Calu3 (cell line): ENCODE measurements at regions of chrX and their contacts with region 1.

Region 1: DNA sequence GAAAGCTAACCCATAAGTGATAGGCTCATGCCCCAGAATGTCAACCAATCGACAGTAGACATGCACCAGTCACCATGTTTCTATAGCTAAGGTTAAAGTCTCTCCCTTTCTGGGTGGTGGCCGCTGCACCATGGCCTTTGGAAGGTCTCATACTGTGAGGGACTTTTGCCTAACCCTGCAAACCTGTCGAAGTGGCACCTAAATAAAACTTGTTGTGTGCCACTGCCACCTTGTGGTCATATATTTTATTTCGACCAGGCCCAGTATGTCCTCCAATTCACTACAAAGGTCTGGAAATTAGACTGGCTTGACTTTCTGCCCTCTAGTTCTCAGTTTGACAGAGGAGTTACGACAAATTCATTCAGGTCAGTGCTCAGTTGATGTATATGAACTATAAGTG is 163.1 kb downstream of the SMARCA1 start:
- DNase-seq: peak; percentile 56
- H3K4me3 Mint-ChIP-seq: no peak overlapping the region
- H3K27ac Mint-ChIP-seq: no peak overlapping the region
- H3K4me1 Mint-ChIP-seq: no peaks in the 10 kb centered on the region
- H3K27me3 Mint-ChIP-seq: no peaks in the 10 kb centered on the region
- CTCF ChIP-seq: peak; percentile 34

Region 2: DNA sequence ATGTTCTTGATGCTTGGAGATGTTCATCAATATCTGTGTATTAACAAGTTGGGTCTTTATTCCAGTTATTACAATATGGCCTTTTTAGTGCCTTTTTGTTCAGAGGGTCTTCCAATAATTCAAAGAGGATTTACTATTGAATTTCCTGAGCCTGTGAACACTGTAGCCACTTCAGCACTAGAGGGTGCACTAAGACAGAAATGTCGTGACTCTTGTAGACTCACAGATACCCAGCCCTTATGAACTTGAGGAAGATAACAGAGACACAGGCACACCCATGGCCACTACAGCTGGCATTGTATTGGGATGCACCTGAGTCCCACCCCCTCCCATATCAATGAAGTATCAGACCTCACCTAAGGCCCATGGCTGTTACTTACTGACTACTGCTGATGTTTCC is 1253.5 kb before region 1 on chrX:
- CTCF ChIA-PET with region 1: no interaction called
- intact Hi-C with region 1: loop called (anchors 5 kb)
- DNase-seq: no peak
- H3K4me3 Mint-ChIP-seq: no peak overlapping the region
- H3K27ac Mint-ChIP-seq: no peak overlapping the region
- H3K4me1 Mint-ChIP-seq: no peaks in the 10 kb centered on the region
- H3K27me3 Mint-ChIP-seq: no peaks in the 10 kb centered on the region
- CTCF ChIP-seq: no peak

Region 3: GRCh38 chrX:128816919-128817318 is 543.3 kb before region 1 on chrX:
- CTCF ChIA-PET with region 1: no interaction called
- intact Hi-C with region 1: loop called (anchors 5 kb)
- DNase-seq: no peak
- H3K4me3 Mint-ChIP-seq: no peak overlapping the region
- H3K27ac Mint-ChIP-seq: no peak overlapping the region
- H3K4me1 Mint-ChIP-seq: no peaks in the 10 kb centered on the region
- H3K27me3 Mint-ChIP-seq: no peaks in the 10 kb centered on the region
- CTCF ChIP-seq: no peak

Region 4: GRCh38 chrX:128973033-128973432 is 387.1 kb before region 1 on chrX:
- CTCF ChIA-PET with region 1: no interaction called
- intact Hi-C with region 1: loop called (anchors 5 kb)
- DNase-seq: no peak
- H3K4me3 Mint-ChIP-seq: no peak overlapping the region
- H3K27ac Mint-ChIP-seq: no peak overlapping the region
- H3K4me1 Mint-ChIP-seq: no peaks in the 10 kb centered on the region
- H3K27me3 Mint-ChIP-seq: no peaks in the 10 kb centered on the region
- CTCF ChIP-seq: no peak